ENCODE measurements at regions of chr17 and their contacts with region 1.

Region 1: DNA sequence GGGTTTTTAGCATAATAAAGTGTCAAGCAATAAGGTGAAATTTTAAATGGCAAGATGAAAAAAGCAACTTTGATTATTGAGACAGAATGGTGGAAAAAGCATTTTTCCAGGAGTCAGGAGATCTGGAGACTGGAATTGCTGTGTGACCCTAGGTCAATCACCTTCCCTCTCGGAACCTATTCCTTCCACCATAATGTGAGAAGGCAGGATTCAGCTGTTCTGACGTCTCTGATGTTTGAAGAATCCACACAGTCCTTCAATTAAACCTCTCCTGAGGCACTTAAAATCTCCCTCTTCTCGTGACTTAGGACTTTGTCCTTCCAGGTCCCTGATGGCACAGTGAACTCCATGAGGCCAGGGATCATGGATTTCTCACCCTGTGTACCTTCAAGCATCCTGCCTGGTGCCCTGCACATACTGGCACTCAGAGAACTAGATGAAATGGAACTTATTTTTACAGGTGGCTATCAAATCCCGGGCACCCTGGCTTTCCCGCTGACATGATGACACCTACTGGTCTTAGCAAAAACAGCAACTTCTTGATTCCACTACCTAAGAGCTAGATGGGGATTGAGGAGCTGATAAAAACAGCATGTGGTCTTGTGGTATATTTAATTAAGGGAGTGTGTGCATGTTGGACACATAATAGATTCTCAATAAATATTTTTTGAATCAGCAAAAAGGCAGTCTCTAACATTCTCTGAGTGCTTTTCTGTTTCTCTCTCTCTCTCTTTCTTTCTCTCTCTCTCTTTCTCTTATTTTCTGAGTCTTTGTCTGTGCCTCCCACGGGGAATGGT is 2.3 kb upstream of the CCDC182 start:
- DNase-seq: peak; percentile 40
- H3K4me3 ChIP-seq: no peak overlapping the region
- H3K27ac ChIP-seq: no peak overlapping the region
- H3K4me1 ChIP-seq: no peaks in the 10 kb centered on the region
- H3K27me3 ChIP-seq: no peaks in the 10 kb centered on the region
- CTCF ChIP-seq: peak; percentile 75 to 84

Region 2: GRCh38 chr17:56977673-56978395 is 769.6 kb before region 1 on chr17 and contains the start of gene SCPEP1:
- CTCF ChIA-PET with region 1: interaction called, 18 read pairs
- dilution Hi-C with region 1: no loop called
- in situ Hi-C with region 1: no loop called
- intact Hi-C with region 1: no loop called
- DNase-seq: peak; percentile 74
- H3K4me3 ChIP-seq: peak within 1 kb of the TSS; percentile 74 to 81 (median 79)
- H3K27ac ChIP-seq: peak within 1 kb of the TSS; percentile 61
- H3K4me1 ChIP-seq: peaks cover 58% of the 10 kb centered on the region
- H3K27me3 ChIP-seq: no peaks in the 10 kb centered on the region
- CTCF ChIP-seq: no peak
- total RNA-seq, gene SCPEP1: 81.8 to 142 TPM

Region 3: GRCh38 chr17:57125406-57125805 is 622.0 kb before region 1 on chr17:
- CTCF ChIA-PET with region 1: no interaction called
- dilution Hi-C with region 1: loop called (anchors 25 kb)
- in situ Hi-C with region 1: loop called in 1 of 2 experiments (anchors 5 kb)
- intact Hi-C with region 1: no loop called
- DNase-seq: no peak
- H3K4me3 ChIP-seq: no peak overlapping the region
- H3K27ac ChIP-seq: no peak overlapping the region
- H3K4me1 ChIP-seq: no peaks in the 10 kb centered on the region
- H3K27me3 ChIP-seq: no peaks in the 10 kb centered on the region
- CTCF ChIP-seq: no peak

Region 4: GRCh38 chr17:57243171-57243948 is 504.1 kb before region 1 on chr17:
- CTCF ChIA-PET with region 1: interaction called, 9 read pairs
- dilution Hi-C with region 1: no loop called
- in situ Hi-C with region 1: loop called (anchors 10 kb)
- intact Hi-C with region 1: loop called (anchors 1 kb)
- DNase-seq: peak; percentile 45
- H3K4me3 ChIP-seq: no peak overlapping the region
- H3K27ac ChIP-seq: no peak overlapping the region
- H3K4me1 ChIP-seq: no peaks in the 10 kb centered on the region
- H3K27me3 ChIP-seq: no peaks in the 10 kb centered on the region
- CTCF ChIP-seq: peak; percentile 100

Region 5: GRCh38 chr17:57671667-57672632 is 75.5 kb before region 1 on chr17:
- CTCF ChIA-PET with region 1: interaction called, 6 read pairs
- dilution Hi-C with region 1: loop called (anchors 5 kb)
- in situ Hi-C with region 1: no loop called
- intact Hi-C with region 1: loop called (anchors 2 kb)
- DNase-seq: peak; percentile 93
- H3K4me3 ChIP-seq: no peak overlapping the region
- H3K27ac ChIP-seq: peak overlapping the region; percentile 71
- H3K4me1 ChIP-seq: peaks cover 25% of the 10 kb centered on the region
- H3K27me3 ChIP-seq: no peaks in the 10 kb centered on the region
- CTCF ChIP-seq: peak; percentile 95

Region 6: GRCh38 chr17:57724026-57724728 is 23.2 kb before region 1 on chr17:
- CTCF ChIA-PET with region 1: no interaction called
- dilution Hi-C with region 1: no loop called
- in situ Hi-C with region 1: no loop called
- intact Hi-C with region 1: no loop called
- DNase-seq: no peak
- H3K4me3 ChIP-seq: no peak overlapping the region
- H3K27ac ChIP-seq: no peak overlapping the region
- H3K4me1 ChIP-seq: no peaks in the 10 kb centered on the region
- H3K27me3 ChIP-seq: peaks cover 2% of the 10 kb centered on the region
- CTCF ChIP-seq: no peak

Region 7: GRCh38 chr17:57995076-57995956 is 247.9 kb after region 1 on chr17:
- CTCF ChIA-PET with region 1: no interaction called
- dilution Hi-C with region 1: no loop called
- in situ Hi-C with region 1: no loop called
- intact Hi-C with region 1: loop called (anchors 10 kb)
- DNase-seq: peak; percentile 61
- H3K4me3 ChIP-seq: no peak overlapping the region
- H3K27ac ChIP-seq: no peak overlapping the region
- H3K4me1 ChIP-seq: no peaks in the 10 kb centered on the region
- H3K27me3 ChIP-seq: no peaks in the 10 kb centered on the region
- CTCF ChIP-seq: peak; percentile 69 to 81

Measured in mammary epithelial cell (primary cell).